ENCODE measurements at regions of chr12 and their contacts with region 1.

Region 1: GRCh38 chr12:12376646-12377448 is 20.0 kb downstream of the BORCS5 start:
- DNase-seq: peak in 16 of 35 experiments; percentile 14 to 82 (median 26)
- ATAC-seq: peak; percentile 48 to 84 (median 72)
- H3K4me3 ChIP-seq: no peak overlapping the region
- H3K4me3 Mint-ChIP-seq: no peak overlapping the region
- H3K27ac ChIP-seq: no peak overlapping the region
- H3K27ac Mint-ChIP-seq: peak overlapping the region; percentile 61 to 74
- H3K4me1 ChIP-seq: peaks cover 8 to 34% of the 10 kb centered on the region in 2 experiments
- H3K4me1 Mint-ChIP-seq: peaks cover 38 to 52% (median 49%) of the 10 kb centered on the region in 3 donors
- H3K27me3 ChIP-seq: no peaks in the 10 kb centered on the region
- H3K27me3 Mint-ChIP-seq: no peaks in the 10 kb centered on the region

Region 2: DNA sequence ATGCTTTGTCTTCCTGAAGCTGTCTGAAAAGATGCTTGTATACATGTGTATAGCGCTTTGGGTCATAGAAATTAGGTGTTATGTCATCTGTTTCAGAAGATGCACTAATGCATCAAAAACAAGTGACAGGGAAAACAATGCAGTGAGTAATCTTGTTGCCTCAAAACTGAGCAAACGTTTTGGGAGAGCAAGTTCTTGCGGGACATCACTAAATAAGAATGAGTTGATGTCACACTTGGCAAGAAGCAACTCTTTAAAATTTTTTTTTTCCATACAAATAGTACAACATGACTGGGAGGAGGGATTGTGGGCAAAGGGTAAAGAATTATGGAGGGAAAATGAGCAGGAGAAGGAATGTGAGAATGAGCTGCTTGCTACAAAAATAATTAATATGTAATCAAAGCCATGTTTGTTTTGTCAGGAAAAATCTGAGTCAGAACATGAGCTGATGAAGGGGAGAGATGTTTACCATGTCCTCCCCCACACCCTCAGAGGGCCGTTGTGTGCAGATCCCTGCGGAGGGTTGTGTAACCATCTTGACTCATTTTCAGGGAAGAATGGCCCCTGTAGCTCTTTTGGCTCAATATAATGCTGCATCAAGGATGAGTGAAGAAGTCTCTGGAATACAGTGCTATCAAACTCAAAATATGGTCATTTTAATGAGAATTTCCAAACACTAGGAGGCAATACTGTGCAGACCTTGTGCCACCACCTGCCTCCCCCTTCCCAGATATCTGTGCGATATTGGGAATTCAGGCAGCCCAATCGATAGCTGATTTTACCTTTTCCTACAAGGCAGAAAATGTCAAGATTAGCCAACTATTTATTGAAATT is 21.4 kb after region 1 on chr12:
- CTCF ChIA-PET with region 1: no interaction called
- POLR2A ChIA-PET with region 1: no interaction called
- DNase-seq: no peak
- ATAC-seq: no peak
- H3K4me3 ChIP-seq: no peak overlapping the region
- H3K4me3 Mint-ChIP-seq: no peak overlapping the region
- H3K27ac ChIP-seq: no peak overlapping the region
- H3K27ac Mint-ChIP-seq: peak overlapping the region in 1 of 2 donors; percentile 28
- H3K4me1 ChIP-seq: peaks cover 0 to 4% of the 10 kb centered on the region in 2 experiments
- H3K4me1 Mint-ChIP-seq: peaks cover 28 to 60% (median 59%) of the 10 kb centered on the region in 3 donors
- H3K27me3 ChIP-seq: no peaks in the 10 kb centered on the region
- H3K27me3 Mint-ChIP-seq: no peaks in the 10 kb centered on the region

Region 3: GRCh38 chr12:12449467-12450025 is 72.7 kb after region 1 on chr12:
- CTCF ChIA-PET with region 1: no interaction called
- POLR2A ChIA-PET with region 1: no interaction called
- DNase-seq: no peak
- ATAC-seq: no peak
- H3K4me3 ChIP-seq: no peak overlapping the region
- H3K4me3 Mint-ChIP-seq: no peak overlapping the region
- H3K27ac ChIP-seq: no peak overlapping the region
- H3K27ac Mint-ChIP-seq: peak overlapping the region in 1 of 2 donors; percentile 4
- H3K4me1 ChIP-seq: peaks cover 0 to 24% of the 10 kb centered on the region in 2 experiments
- H3K4me1 Mint-ChIP-seq: peaks cover 7 to 38% (median 32%) of the 10 kb centered on the region in 3 donors
- H3K27me3 ChIP-seq: no peaks in the 10 kb centered on the region
- H3K27me3 Mint-ChIP-seq: no peaks in the 10 kb centered on the region

Region 4: GRCh38 chr12:12467688-12468261 is 90.9 kb after region 1 on chr12:
- CTCF ChIA-PET with region 1: interaction called, 4 to 8 read pairs
- POLR2A ChIA-PET with region 1: interaction called, 11 to 16 read pairs
- DNase-seq: peak in 32 of 35 experiments; percentile 13 to 71 (median 40)
- ATAC-seq: peak; percentile 16 to 57 (median 34)
- H3K4me3 ChIP-seq: no peak overlapping the region
- H3K4me3 Mint-ChIP-seq: peak overlapping the region; percentile 50 to 53 (median 53)
- H3K27ac ChIP-seq: peak overlapping the region; percentile 95
- H3K27ac Mint-ChIP-seq: peak overlapping the region; percentile 94 to 95
- H3K4me1 ChIP-seq: peaks cover 23 to 53% of the 10 kb centered on the region in 2 experiments
- H3K4me1 Mint-ChIP-seq: peaks cover 60 to 87% (median 77%) of the 10 kb centered on the region in 3 donors
- H3K27me3 ChIP-seq: no peaks in the 10 kb centered on the region
- H3K27me3 Mint-ChIP-seq: no peaks in the 10 kb centered on the region

Region 5: GRCh38 chr12:12482959-12483358 is 106.1 kb after region 1 on chr12:
- CTCF ChIA-PET with region 1: interaction called, 5 to 13 read pairs
- POLR2A ChIA-PET with region 1: interaction called, 5 to 8 read pairs
- DNase-seq: no peak
- ATAC-seq: no peak
- H3K4me3 ChIP-seq: peak overlapping the region in 1 of 2 donors; percentile 45
- H3K4me3 Mint-ChIP-seq: peak overlapping the region; percentile 58 to 84 (median 81)
- H3K27ac ChIP-seq: peak overlapping the region; percentile 97
- H3K27ac Mint-ChIP-seq: peak overlapping the region; percentile 98 to 99
- H3K4me1 ChIP-seq: peaks cover 19 to 23% of the 10 kb centered on the region in 2 experiments
- H3K4me1 Mint-ChIP-seq: peaks cover 37 to 80% (median 79%) of the 10 kb centered on the region in 3 donors
- H3K27me3 ChIP-seq: no peaks in the 10 kb centered on the region
- H3K27me3 Mint-ChIP-seq: no peaks in the 10 kb centered on the region

Region 6: GRCh38 chr12:12562585-12563261 is 185.9 kb after region 1 on chr12 and contains the start of gene DUSP16:
- CTCF ChIA-PET with region 1: interaction called, 5 to 14 read pairs
- POLR2A ChIA-PET with region 1: interaction called in 1 of 2 experiments, 8 read pairs
- DNase-seq: peak; percentile 55 to 92 (median 77)
- ATAC-seq: peak; percentile 66 to 80 (median 69)
- H3K4me3 ChIP-seq: peak within 1 kb of the TSS; percentile 90 to 93
- H3K4me3 Mint-ChIP-seq: peak within 1 kb of the TSS; percentile 83 to 89 (median 85)
- H3K27ac ChIP-seq: peak within 1 kb of the TSS; percentile 100
- H3K27ac Mint-ChIP-seq: peak within 1 kb of the TSS; percentile 92 to 93
- H3K4me1 ChIP-seq: peaks cover 8 to 18% of the 10 kb centered on the region in 2 experiments
- H3K4me1 Mint-ChIP-seq: peaks cover 37 to 46% (median 40%) of the 10 kb centered on the region in 3 donors
- H3K27me3 ChIP-seq: no peaks in the 10 kb centered on the region
- H3K27me3 Mint-ChIP-seq: no peaks in the 10 kb centered on the region
- total RNA-seq, gene DUSP16: 44.6 to 72.3 (median 61.0) TPM

Region 7: DNA sequence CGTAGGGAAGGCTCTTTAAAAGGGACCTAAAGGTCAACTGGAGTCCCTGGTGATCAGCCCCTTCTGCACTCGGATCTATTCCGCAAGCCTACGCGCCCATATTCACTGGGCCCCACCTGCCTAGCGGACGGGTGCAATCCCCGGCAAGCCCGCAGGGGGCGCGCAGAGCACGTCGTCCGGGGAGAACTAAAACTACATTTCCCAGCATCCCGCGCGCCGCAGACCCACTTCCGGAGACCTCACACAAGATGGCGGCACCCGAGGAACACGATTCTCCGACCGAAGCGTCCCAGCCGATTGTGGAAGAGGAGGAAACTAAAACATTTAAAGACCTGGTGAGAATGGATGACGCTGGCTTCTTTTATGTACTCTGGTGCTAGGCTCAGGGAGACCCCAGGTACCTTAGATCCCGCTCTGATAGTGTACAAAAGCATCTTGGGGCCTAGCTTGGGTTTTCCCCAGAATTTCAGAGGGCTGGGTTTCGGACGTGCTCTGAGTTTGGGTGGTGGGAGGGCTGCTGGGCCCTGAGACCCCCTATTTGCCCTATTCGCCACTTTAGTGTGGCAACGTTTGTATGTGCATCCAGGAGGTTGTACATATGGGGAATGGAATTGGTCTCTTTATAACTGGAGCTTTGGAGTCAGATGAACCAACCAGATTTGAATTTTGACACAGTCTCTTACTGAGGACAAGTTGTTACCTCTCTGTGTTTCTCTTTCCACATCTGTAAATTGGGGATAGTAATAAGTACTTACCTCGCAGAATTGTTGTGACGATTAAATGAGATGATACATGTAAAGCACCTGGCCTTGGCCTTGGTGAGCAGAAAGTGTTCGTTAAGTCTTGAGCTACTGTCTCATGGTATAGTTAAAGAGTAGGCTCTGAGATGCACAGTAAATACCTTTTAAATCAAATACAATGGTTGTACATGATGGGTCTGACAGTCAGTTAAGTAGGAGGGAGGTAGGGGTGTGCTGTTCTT is 436.6 kb after region 1 on chr12 and contains the start of gene DDX47:
- CTCF ChIA-PET with region 1: no interaction called
- POLR2A ChIA-PET with region 1: interaction called in 1 of 2 experiments, 14 read pairs
- DNase-seq: peak; percentile 88 to 98 (median 96)
- ATAC-seq: peak; percentile 81 to 92 (median 83)
- H3K4me3 ChIP-seq: peak within 1 kb of the TSS; percentile 78 to 97
- H3K4me3 Mint-ChIP-seq: peak within 1 kb of the TSS; percentile 88 to 99 (median 91)
- H3K27ac ChIP-seq: peak within 1 kb of the TSS; percentile 77
- H3K27ac Mint-ChIP-seq: peak within 1 kb of the TSS; percentile 83 to 89
- H3K4me1 ChIP-seq: peaks cover 26 to 32% of the 10 kb centered on the region in 2 experiments
- H3K4me1 Mint-ChIP-seq: peaks cover 61 to 74% (median 73%) of the 10 kb centered on the region in 3 donors
- H3K27me3 ChIP-seq: no peaks in the 10 kb centered on the region
- H3K27me3 Mint-ChIP-seq: no peaks in the 10 kb centered on the region
- total RNA-seq, gene DDX47: 60.4 to 141 (median 69.8) TPM

Region 8: DNA sequence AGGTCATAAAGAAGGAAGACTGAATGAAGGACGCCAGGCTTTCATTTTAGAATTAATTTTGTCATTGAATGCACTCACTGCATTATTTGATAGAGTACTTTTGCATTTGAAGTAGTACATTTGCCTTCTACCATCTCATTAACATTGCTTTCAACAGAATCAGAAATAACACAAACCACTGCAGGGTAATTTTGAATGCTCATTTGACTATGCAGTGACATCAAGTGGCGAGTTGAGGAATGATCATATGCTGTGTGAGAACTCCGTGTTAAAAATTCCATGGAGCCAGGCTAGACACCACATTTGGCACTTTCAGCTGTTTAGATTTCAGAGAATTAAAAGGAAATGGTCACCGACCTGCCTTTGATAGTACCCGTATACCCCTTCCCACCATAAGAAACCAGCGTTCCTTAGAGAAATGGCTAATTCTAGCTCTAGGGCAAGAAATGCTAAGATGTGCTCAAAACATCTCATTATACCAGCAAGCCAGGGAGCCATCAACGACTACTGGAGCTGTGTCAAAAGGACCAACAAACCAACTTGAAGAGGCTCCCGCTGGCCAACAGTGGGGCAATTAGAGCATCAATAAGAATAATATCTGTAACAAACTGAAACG is 606.7 kb after region 1 on chr12:
- CTCF ChIA-PET with region 1: no interaction called
- POLR2A ChIA-PET with region 1: no interaction called
- DNase-seq: peak in 2 of 35 experiments; percentile 2 to 37
- ATAC-seq: peak in 2 of 4 experiments; percentile 24 to 51
- H3K4me3 ChIP-seq: no peak overlapping the region
- H3K4me3 Mint-ChIP-seq: no peak overlapping the region
- H3K27ac ChIP-seq: no peak overlapping the region
- H3K27ac Mint-ChIP-seq: no peak overlapping the region
- H3K4me1 ChIP-seq: no peaks in the 10 kb centered on the region
- H3K4me1 Mint-ChIP-seq: peaks cover 0 to 3% (median 0%) of the 10 kb centered on the region in 3 donors
- H3K27me3 ChIP-seq: no peaks in the 10 kb centered on the region
- H3K27me3 Mint-ChIP-seq: no peaks in the 10 kb centered on the region

Measured in T-cell (primary cell).